Dendritic cell treated with granulocyte-macrophage colony-stimulating factor and Interleukin-4, amounts not matched to agents 40 ng/mL and 50 ng/mL, for 4 days (primary cell): ENCODE measurements at regions of chr16 and their contacts with region 1.

Region 1: DNA sequence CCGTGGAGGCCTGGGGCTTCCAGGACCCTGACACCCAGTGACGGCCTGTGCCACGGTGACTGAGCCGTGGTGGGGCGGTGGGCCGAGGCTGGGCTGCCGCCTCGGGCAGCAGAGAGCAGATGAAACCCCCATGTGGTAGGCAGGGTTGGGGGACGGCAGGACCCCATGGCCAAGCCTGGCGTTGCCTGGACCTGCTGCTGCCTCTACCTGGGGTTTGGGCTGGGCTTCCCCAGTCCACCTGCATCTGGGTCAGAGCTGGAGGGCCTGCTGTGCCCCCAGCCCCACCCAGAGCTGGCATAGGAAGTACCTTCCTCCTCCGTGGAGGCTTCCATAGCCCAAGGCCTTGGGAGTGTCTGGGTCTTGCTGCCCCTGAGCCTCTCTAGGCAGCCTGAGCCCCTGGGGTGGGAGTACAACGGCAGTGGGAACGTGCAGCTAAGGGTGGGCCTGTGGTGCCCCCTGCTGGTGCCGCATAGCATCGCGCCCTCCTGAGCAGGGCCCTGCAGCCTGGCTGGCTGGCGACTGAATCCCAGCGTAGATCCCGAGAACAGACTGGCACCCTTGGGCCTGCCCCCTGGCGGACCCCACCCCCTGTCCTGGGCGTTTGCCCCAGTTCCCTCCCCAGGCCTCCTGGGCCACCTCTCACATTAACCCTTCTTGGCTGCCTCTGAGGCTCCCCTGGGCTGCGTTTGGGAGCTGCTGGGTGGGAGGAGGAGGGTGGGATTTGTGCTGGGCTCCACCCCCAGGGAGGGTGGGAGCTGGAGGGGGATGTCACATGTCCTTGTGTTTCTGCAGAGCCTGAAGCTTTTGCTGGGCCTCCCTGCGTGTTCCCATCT is 12.6 kb upstream of the ATP6V0C start:
- H3K4me3 Mint-ChIP-seq: peak overlapping the region; percentile 71
- H3K27ac Mint-ChIP-seq: peak overlapping the region; percentile 72
- H3K4me1 Mint-ChIP-seq: peaks cover 58% of the 10 kb centered on the region
- H3K27me3 Mint-ChIP-seq: no peaks in the 10 kb centered on the region

Region 2: DNA sequence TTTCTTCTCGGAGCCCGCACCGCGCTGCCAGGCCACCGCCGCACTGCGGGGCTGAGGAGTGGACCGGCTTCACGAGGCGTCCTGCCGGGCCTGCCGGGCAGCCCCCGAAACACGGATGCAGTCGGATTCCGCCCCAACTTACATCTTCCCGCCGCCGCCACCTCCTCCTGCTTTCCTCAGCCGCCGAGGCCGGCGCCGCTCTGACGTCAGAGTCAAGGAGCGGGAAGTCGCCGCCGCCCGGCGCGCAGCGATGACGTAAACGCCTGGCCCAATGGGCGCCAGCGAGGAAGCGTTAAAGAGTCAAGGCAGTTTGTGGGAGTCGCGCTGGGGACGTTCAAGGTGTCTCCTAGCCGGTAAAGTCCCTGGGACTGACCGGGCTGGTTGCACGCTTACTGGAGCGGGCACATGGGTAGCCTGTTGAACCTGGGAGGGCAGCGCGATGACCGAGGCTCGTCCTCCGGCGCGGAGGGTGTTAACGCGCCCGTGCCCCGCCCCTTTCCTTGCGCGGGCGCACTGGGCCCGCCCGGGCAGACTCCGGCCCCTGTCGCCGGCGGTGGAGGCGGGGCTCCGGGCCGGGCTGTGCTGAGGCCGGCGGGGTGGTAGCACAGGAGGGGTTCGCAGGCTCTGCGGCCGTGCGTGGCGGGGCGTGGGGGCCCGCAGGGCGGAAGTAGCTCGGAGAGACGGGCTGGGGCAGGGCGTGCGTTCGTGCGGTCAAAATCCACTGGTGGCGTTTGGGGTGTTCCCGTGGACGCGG is 233.0 kb before region 1 on chr16 and contains the start of gene RNPS1:
- intact Hi-C with region 1: loop called (anchors 10 kb)
- H3K4me3 Mint-ChIP-seq: peak within 1 kb of the TSS; percentile 97
- H3K27ac Mint-ChIP-seq: peak within 1 kb of the TSS; percentile 98
- H3K4me1 Mint-ChIP-seq: peaks cover 62% of the 10 kb centered on the region
- H3K27me3 Mint-ChIP-seq: no peaks in the 10 kb centered on the region

Region 3: GRCh38 chr16:2340564-2341455 is 160.3 kb before region 1 on chr16 and contains the start of gene ABCA3:
- intact Hi-C with region 1: loop called (anchors 1 kb)
- H3K4me3 Mint-ChIP-seq: peak within 1 kb of the TSS; percentile 75
- H3K27ac Mint-ChIP-seq: peak within 1 kb of the TSS; percentile 41
- H3K4me1 Mint-ChIP-seq: peaks cover 8% of the 10 kb centered on the region
- H3K27me3 Mint-ChIP-seq: peaks cover 64% of the 10 kb centered on the region

Region 4: GRCh38 chr16:2428051-2428783 is 72.9 kb before region 1 on chr16:
- intact Hi-C with region 1: loop called (anchors 1 kb)
- H3K4me3 Mint-ChIP-seq: peak overlapping the region; percentile 73
- H3K27ac Mint-ChIP-seq: peak overlapping the region; percentile 60
- H3K4me1 Mint-ChIP-seq: peaks cover 23% of the 10 kb centered on the region
- H3K27me3 Mint-ChIP-seq: peaks cover 21% of the 10 kb centered on the region

Region 5: GRCh38 chr16:2474877-2475412 is 26.2 kb before region 1 on chr16 and contains the start of gene TBC1D24:
- intact Hi-C with region 1: loop called (anchors 2 kb)
- H3K4me3 Mint-ChIP-seq: peak within 1 kb of the TSS; percentile 84
- H3K27ac Mint-ChIP-seq: peak within 1 kb of the TSS; percentile 90
- H3K4me1 Mint-ChIP-seq: peaks cover 45% of the 10 kb centered on the region
- H3K27me3 Mint-ChIP-seq: peaks cover 30% of the 10 kb centered on the region

Region 6: GRCh38 chr16:2586241-2586640 is 85.1 kb after region 1 on chr16:
- intact Hi-C with region 1: no loop called
- H3K4me3 Mint-ChIP-seq: no peak overlapping the region
- H3K27ac Mint-ChIP-seq: no peak overlapping the region
- H3K4me1 Mint-ChIP-seq: no peaks in the 10 kb centered on the region
- H3K27me3 Mint-ChIP-seq: no peaks in the 10 kb centered on the region